ENCODE measurements at regions of chr2 and their contacts with region 1.

Region 1: DNA sequence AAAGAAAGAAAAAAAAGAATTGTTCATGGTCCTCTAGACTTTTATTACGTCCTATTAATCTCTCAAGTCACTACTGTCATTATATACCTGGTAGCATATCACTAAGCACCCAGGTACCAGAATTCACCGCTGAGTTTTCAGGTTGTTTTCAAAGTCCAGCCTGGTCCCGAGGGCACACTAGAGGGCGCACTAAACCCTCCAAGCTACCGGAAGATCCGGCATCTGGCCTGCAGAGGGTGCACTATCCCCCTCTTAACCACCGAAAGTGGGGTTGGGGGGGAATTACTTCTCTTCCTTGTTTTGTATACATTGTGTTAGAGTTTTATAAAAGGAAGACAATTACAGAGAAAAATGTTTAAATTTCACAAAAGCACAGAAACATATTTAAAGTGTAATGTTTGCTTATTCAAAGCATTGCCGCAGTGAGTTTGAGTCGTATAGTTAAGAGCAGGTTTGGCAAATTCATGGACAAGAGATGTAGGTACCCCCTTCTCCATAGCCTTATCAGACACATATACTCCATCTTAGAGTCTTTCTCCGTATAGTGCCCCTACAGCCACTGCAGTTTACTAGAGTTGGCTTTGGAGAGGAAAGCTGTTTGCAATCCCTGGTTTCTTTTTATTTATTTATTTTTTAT is 19.2 kb downstream of the MOGAT1 start:
- DNase-seq: peak; percentile 56
- H3K4me3 ChIP-seq: no peak overlapping the region
- H3K27ac ChIP-seq: no peak overlapping the region
- H3K27me3 ChIP-seq: no peaks in the 10 kb centered on the region
- CTCF ChIP-seq: peak; percentile 100

Region 2: GRCh38 chr2:222671259-222672067 is 19.2 kb before region 1 on chr2 and contains the start of gene MOGAT1:
- CTCF ChIA-PET with region 1: interaction called, 11 read pairs
- POLR2A ChIA-PET with region 1: no interaction called
- DNase-seq: no peak
- H3K4me3 ChIP-seq: peak within 1 kb of the TSS; percentile 48
- H3K27ac ChIP-seq: no peak within 1 kb of the TSS
- H3K27me3 ChIP-seq: peaks cover 22% of the 10 kb centered on the region
- CTCF ChIP-seq: no peak
- polyA plus RNA-seq, gene MOGAT1: not detected in 2 replicates

Region 3: GRCh38 chr2:222707689-222708525 is 17.2 kb after region 1 on chr2:
- CTCF ChIA-PET with region 1: interaction called, 87 read pairs
- POLR2A ChIA-PET with region 1: interaction called, 3 read pairs
- DNase-seq: no peak
- H3K4me3 ChIP-seq: no peak overlapping the region
- H3K27ac ChIP-seq: no peak overlapping the region
- H3K27me3 ChIP-seq: no peaks in the 10 kb centered on the region
- CTCF ChIP-seq: peak; percentile 89

Region 4: GRCh38 chr2:222903234-222904220 is 212.8 kb after region 1 on chr2:
- CTCF ChIA-PET with region 1: interaction called, 48 read pairs
- POLR2A ChIA-PET with region 1: no interaction called
- DNase-seq: no peak
- H3K4me3 ChIP-seq: no peak overlapping the region
- H3K27ac ChIP-seq: peak overlapping the region; percentile 77
- H3K27me3 ChIP-seq: no peaks in the 10 kb centered on the region
- CTCF ChIP-seq: peak; percentile 67

Region 5: GRCh38 chr2:222922019-222922800 is 231.5 kb after region 1 on chr2:
- CTCF ChIA-PET with region 1: interaction called, 10 read pairs
- POLR2A ChIA-PET with region 1: no interaction called
- DNase-seq: no peak
- H3K4me3 ChIP-seq: no peak overlapping the region
- H3K27ac ChIP-seq: no peak overlapping the region
- H3K27me3 ChIP-seq: no peaks in the 10 kb centered on the region
- CTCF ChIP-seq: no peak

Measured in AG04450 (cell line).